CD4-positive, alpha-beta memory T cell (primary cell): ENCODE measurements at regions of chr20 and their contacts with region 1.

Region 1: GRCh38 chr20:38748097-38748860 is at the start of gene ACTR5:
- DNase-seq: peak; percentile 96 to 100 (median 97)
- H3K4me3 ChIP-seq: peak within 1 kb of the TSS; percentile 71 to 92
- H3K4me3 Mint-ChIP-seq: peak within 1 kb of the TSS; percentile 97 to 99 (median 98)
- H3K27ac ChIP-seq: peak within 1 kb of the TSS; percentile 88
- H3K27ac Mint-ChIP-seq: peak within 1 kb of the TSS; percentile 98 to 100 (median 100)
- H3K4me1 ChIP-seq: peaks cover 21% of the 10 kb centered on the region
- H3K4me1 Mint-ChIP-seq: peaks cover 14 to 23% (median 19%) of the 10 kb centered on the region in 4 donors
- H3K27me3 ChIP-seq: no peaks in the 10 kb centered on the region
- H3K27me3 Mint-ChIP-seq: peaks cover 6% of the 10 kb centered on the region in 2 donors
- total RNA-seq, gene ACTR5: 16.9 to 17.4 TPM

Region 2: GRCh38 chr20:38497246-38497935 is 250.9 kb before region 1 on chr20:
- CTCF ChIA-PET with region 1: no interaction called
- POLR2A ChIA-PET with region 1: no interaction called
- intact Hi-C with region 1: no loop called
- DNase-seq: no peak
- H3K4me3 ChIP-seq: no peak overlapping the region
- H3K4me3 Mint-ChIP-seq: no peak overlapping the region
- H3K27ac ChIP-seq: no peak overlapping the region
- H3K27ac Mint-ChIP-seq: peak overlapping the region in 1 of 7 donors; percentile 19
- H3K4me1 ChIP-seq: no peaks in the 10 kb centered on the region
- H3K4me1 Mint-ChIP-seq: peaks cover 0 to 6% (median 1%) of the 10 kb centered on the region in 4 donors
- H3K27me3 ChIP-seq: no peaks in the 10 kb centered on the region
- H3K27me3 Mint-ChIP-seq: no peaks in the 10 kb centered on the region

Region 3: DNA sequence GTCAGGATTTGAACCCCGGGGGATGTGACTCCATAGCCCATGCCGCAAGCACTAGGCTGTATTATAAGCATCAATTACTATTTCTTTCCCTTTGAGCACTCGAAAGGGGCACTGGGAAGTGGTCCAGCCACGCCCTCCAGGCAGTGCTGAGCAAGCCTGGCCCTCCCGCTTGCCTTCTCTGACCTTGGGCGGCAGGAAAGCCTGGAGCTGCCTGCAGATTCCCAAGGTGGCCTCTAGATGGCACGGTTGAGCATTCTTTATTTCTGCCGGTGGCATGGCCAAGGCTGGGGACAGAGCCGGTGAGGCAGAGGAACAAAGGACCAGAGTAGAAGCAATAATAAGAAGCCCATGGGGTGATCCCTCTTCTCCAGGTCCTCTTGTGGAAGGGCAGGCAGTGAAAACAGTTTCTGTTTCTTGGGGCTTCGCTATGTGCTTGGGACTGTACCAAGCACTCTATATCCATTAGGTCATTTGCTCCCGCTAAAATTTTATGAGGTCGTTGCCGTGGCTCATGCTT is 114.6 kb before region 1 on chr20:
- CTCF ChIA-PET with region 1: interaction called, 28 read pairs
- POLR2A ChIA-PET with region 1: interaction called, 3 read pairs
- intact Hi-C with region 1: loop called (anchors 1 kb)
- DNase-seq: peak; percentile 40 to 53 (median 43)
- H3K4me3 ChIP-seq: no peak overlapping the region
- H3K4me3 Mint-ChIP-seq: peak overlapping the region in 1 of 8 donors; percentile 23
- H3K27ac ChIP-seq: no peak overlapping the region
- H3K27ac Mint-ChIP-seq: peak overlapping the region in 1 of 7 donors; percentile 23
- H3K4me1 ChIP-seq: no peaks in the 10 kb centered on the region
- H3K4me1 Mint-ChIP-seq: peaks cover 3 to 6% (median 4%) of the 10 kb centered on the region in 4 donors
- H3K27me3 ChIP-seq: no peaks in the 10 kb centered on the region
- H3K27me3 Mint-ChIP-seq: peaks cover 14 to 24% of the 10 kb centered on the region in 2 donors

Region 4: GRCh38 chr20:38658879-38659596 is 89.2 kb before region 1 on chr20:
- CTCF ChIA-PET with region 1: interaction called, 15 read pairs
- POLR2A ChIA-PET with region 1: no interaction called
- intact Hi-C with region 1: no loop called
- DNase-seq: peak in 4 of 5 donors; percentile 22 to 36 (median 26)
- H3K4me3 ChIP-seq: no peak overlapping the region
- H3K4me3 Mint-ChIP-seq: no peak overlapping the region
- H3K27ac ChIP-seq: no peak overlapping the region
- H3K27ac Mint-ChIP-seq: peak overlapping the region in 1 of 7 donors; percentile 53
- H3K4me1 ChIP-seq: no peaks in the 10 kb centered on the region
- H3K4me1 Mint-ChIP-seq: peaks cover 0 to 3% (median under 1%) of the 10 kb centered on the region in 4 donors
- H3K27me3 ChIP-seq: no peaks in the 10 kb centered on the region
- H3K27me3 Mint-ChIP-seq: peaks cover 21 to 39% of the 10 kb centered on the region in 2 donors

Region 5: GRCh38 chr20:38737887-38738286 is 10.4 kb before region 1 on chr20:
- CTCF ChIA-PET with region 1: interaction called, 15 read pairs
- POLR2A ChIA-PET with region 1: interaction called, 4 read pairs
- intact Hi-C with region 1: no loop called
- DNase-seq: no peak
- H3K4me3 ChIP-seq: no peak overlapping the region
- H3K4me3 Mint-ChIP-seq: no peak overlapping the region
- H3K27ac ChIP-seq: no peak overlapping the region
- H3K27ac Mint-ChIP-seq: no peak overlapping the region
- H3K4me1 ChIP-seq: no peaks in the 10 kb centered on the region
- H3K4me1 Mint-ChIP-seq: no peaks in the 10 kb centered on the region
- H3K27me3 ChIP-seq: peaks cover 22% of the 10 kb centered on the region
- H3K27me3 Mint-ChIP-seq: peaks cover 56 to 60% of the 10 kb centered on the region in 2 donors

Region 6: GRCh38 chr20:38805502-38805957 is 57.3 kb after region 1 on chr20 and contains the start of gene PPP1R16B:
- CTCF ChIA-PET with region 1: interaction called, 7 read pairs
- POLR2A ChIA-PET with region 1: interaction called, 24 read pairs
- intact Hi-C with region 1: loop called (anchors 1 kb)
- DNase-seq: peak; percentile 79 to 84 (median 80)
- H3K4me3 ChIP-seq: peak within 1 kb of the TSS; percentile 76 to 94
- H3K4me3 Mint-ChIP-seq: peak within 1 kb of the TSS; percentile 87 to 94 (median 92)
- H3K27ac ChIP-seq: peak within 1 kb of the TSS; percentile 96
- H3K27ac Mint-ChIP-seq: peak within 1 kb of the TSS; percentile 97 to 100 (median 99)
- H3K4me1 ChIP-seq: peaks cover 59% of the 10 kb centered on the region
- H3K4me1 Mint-ChIP-seq: peaks cover 45 to 58% (median 50%) of the 10 kb centered on the region in 4 donors
- H3K27me3 ChIP-seq: no peaks in the 10 kb centered on the region
- H3K27me3 Mint-ChIP-seq: no peaks in the 10 kb centered on the region
- total RNA-seq, gene PPP1R16B: 54.3 to 55.1 TPM

Region 7: GRCh38 chr20:38893565-38894090 is 145.3 kb after region 1 on chr20:
- CTCF ChIA-PET with region 1: interaction called, 56 read pairs
- POLR2A ChIA-PET with region 1: interaction called, 5 read pairs
- intact Hi-C with region 1: loop called (anchors 1 kb)
- DNase-seq: peak; percentile 74 to 84 (median 79)
- H3K4me3 ChIP-seq: peak overlapping the region in 1 of 2 donors; percentile 25
- H3K4me3 Mint-ChIP-seq: peak overlapping the region; percentile 22 to 75 (median 67)
- H3K27ac ChIP-seq: peak overlapping the region; percentile 64
- H3K27ac Mint-ChIP-seq: peak overlapping the region; percentile 90 to 96 (median 93)
- H3K4me1 ChIP-seq: peaks cover 36% of the 10 kb centered on the region
- H3K4me1 Mint-ChIP-seq: peaks cover 24 to 41% (median 28%) of the 10 kb centered on the region in 4 donors
- H3K27me3 ChIP-seq: no peaks in the 10 kb centered on the region
- H3K27me3 Mint-ChIP-seq: no peaks in the 10 kb centered on the region

Region 8: GRCh38 chr20:38962044-38962927 is 214.0 kb after region 1 on chr20 and contains the start of gene DHX35:
- CTCF ChIA-PET with region 1: interaction called, 4 read pairs
- POLR2A ChIA-PET with region 1: interaction called, 5 read pairs
- intact Hi-C with region 1: loop called (anchors 1 kb)
- DNase-seq: peak; percentile 98 to 99 (median 98)
- H3K4me3 ChIP-seq: peak within 1 kb of the TSS; percentile 86 to 98
- H3K4me3 Mint-ChIP-seq: peak within 1 kb of the TSS; percentile 88 to 98 (median 96)
- H3K27ac ChIP-seq: peak within 1 kb of the TSS; percentile 76
- H3K27ac Mint-ChIP-seq: peak within 1 kb of the TSS; percentile 90 to 98 (median 96)
- H3K4me1 ChIP-seq: peaks cover 24% of the 10 kb centered on the region
- H3K4me1 Mint-ChIP-seq: peaks cover 12 to 31% (median 25%) of the 10 kb centered on the region in 4 donors
- H3K27me3 ChIP-seq: no peaks in the 10 kb centered on the region
- H3K27me3 Mint-ChIP-seq: no peaks in the 10 kb centered on the region
- total RNA-seq, gene DHX35: 11.5 to 11.8 TPM